MCF 10A (cell line): ENCODE measurements at regions of chr10 and their contacts with region 1.

Region 1: GRCh38 chr10:113087165-113088029 is 137.3 kb downstream of the TCF7L2 start:
- DNase-seq: peak; percentile 98
- H3K4me3 Mint-ChIP-seq: peak overlapping the region; percentile 35
- H3K27ac Mint-ChIP-seq: peak overlapping the region; percentile 91
- H3K4me1 Mint-ChIP-seq: peaks cover 29% of the 10 kb centered on the region
- H3K27me3 Mint-ChIP-seq: no peaks in the 10 kb centered on the region
- CTCF ChIP-seq: no peak

Region 2: DNA sequence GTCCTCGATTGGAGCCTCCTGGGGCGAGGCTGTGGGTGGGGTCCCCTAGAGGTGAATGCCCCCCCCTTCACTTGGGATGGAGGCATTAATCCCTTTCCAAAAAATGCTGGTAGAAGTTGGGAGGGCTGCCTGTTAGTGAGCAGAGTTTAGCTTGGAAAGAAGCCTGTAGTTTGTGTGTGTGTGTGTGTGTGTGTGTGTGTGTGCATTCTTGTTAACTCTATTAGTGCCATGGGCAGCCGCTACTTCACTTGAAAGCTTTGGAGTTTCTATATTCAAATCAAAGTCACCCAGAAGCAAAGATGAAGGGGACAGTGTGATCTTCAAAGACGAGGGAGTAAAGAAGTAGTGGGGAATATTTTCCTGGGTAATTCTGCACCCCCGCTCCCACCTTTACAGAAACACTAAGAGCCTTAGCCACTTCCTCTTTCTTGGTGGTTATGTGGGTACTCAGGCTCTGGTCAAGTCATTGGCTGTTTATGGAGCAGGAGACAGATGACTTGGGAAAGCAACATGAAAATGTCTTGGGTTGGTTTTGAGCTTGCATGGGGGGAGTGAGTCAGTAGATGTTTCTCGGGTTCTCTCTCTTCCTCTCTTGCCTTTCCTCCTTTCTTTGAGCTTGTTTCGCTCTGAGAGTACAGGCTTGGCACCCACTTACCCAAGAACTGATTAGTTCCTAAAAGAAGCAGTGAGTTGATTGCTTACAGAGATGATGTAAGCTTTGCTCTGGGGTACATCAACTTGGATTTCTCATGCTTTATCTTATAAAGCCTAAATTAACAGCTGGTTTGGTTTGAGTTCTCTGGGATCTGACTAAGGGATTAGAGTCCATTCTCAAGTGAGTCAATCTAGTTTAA is 101.5 kb before region 1 on chr10:
- CTCF ChIA-PET with region 1: no interaction called
- POLR2A ChIA-PET with region 1: no interaction called
- intact Hi-C with region 1: no loop called
- DNase-seq: no peak
- H3K4me3 Mint-ChIP-seq: no peak overlapping the region
- H3K27ac Mint-ChIP-seq: no peak overlapping the region
- H3K4me1 Mint-ChIP-seq: peaks cover 26% of the 10 kb centered on the region
- H3K27me3 Mint-ChIP-seq: no peaks in the 10 kb centered on the region
- CTCF ChIP-seq: no peak

Region 3: DNA sequence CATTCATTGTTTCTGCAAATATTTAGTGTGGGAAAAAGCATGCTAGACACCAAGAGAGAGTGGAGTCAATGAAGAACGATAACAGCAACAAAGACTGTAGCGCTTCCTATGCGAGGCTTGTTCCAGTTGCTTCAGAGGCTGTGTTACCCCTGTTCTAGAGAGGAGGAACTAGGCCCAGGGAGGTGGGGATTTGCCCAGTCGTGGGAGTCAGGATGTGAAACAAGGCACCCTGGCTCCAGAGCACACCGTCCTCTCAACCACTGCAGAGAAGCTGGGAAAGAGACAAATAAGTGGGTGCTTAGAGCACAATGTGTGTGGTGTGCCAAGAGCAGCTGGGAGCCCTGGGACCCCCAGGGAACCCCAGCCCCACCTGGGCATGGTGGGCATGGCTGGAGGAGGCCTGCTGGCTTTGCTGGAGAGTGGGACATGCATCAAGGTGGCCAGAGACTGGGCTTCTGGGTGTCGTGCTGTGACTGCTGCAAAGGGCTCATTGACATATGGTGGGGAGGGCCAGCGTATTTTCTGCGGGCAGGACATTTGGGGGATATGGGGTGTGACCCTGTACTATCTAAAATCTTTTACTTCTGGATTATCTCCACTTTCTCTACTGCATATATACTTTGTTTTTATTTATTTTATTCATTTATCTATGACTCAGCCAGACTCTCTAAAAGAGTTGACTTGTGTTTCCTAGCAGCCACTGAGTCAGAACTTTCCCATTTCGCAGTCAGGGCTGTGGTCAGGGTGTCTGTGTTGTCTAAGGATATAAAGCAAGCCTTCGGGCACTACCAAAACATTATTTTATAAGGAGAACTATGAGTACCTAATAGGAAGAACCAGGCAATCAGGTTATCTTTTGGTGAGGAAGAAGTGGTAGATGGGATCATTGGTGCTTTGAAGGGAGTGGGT is 42.0 kb before region 1 on chr10:
- CTCF ChIA-PET with region 1: interaction called, 3 read pairs
- POLR2A ChIA-PET with region 1: interaction called, 3 read pairs
- intact Hi-C with region 1: loop called (anchors 2 kb)
- DNase-seq: peak; percentile 89
- H3K4me3 Mint-ChIP-seq: peak overlapping the region; percentile 32
- H3K27ac Mint-ChIP-seq: peak overlapping the region; percentile 71
- H3K4me1 Mint-ChIP-seq: peaks cover 69% of the 10 kb centered on the region
- H3K27me3 Mint-ChIP-seq: no peaks in the 10 kb centered on the region
- CTCF ChIP-seq: no peak

Region 4: DNA sequence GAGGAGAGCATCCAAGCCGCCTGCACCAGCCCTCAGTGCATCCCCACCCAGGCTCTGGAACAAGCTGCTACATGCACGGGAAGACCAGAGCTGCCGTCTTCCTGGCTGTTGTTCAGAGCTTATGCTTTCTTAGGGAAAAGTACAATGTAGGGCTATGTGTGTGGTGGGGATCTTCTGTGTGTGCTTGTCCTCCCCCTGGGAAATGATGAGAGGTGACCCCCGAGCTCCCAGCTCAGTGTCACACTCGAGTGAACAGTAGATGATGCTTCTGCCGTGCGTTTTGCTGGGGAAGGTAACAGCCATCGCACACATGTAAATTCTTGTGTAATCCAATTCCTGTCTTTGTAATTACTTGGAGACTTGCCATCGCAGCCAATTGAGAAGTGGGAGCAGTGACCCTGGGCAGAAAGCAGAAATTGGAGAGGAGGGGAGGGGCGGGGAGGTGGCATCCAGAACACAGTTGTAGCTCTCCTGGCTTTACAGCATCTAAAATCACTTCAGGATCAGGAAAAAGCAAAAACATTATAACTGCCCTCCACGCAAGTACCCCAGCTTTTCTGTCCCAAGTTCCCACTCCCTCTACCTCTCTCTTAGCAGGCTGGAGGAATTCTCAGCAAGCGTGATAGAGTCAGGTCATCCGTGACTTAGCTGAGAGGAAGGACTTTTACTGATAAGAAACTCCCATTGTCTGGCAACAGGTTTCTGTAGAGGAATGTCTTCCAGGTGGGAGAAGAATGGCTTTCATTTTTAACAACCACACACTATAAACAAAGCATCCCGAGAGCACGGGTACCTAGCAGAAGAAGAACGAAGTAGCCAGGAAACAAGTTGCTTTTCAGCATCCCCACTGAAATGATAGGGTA is 12.3 kb after region 1 on chr10:
- CTCF ChIA-PET with region 1: interaction called, 3 read pairs
- POLR2A ChIA-PET with region 1: interaction called, 11 read pairs
- intact Hi-C with region 1: no loop called
- DNase-seq: peak; percentile 86
- H3K4me3 Mint-ChIP-seq: peak overlapping the region; percentile 32
- H3K27ac Mint-ChIP-seq: peak overlapping the region; percentile 53
- H3K4me1 Mint-ChIP-seq: peaks cover 15% of the 10 kb centered on the region
- H3K27me3 Mint-ChIP-seq: no peaks in the 10 kb centered on the region
- CTCF ChIP-seq: no peak

Region 5: GRCh38 chr10:113213035-113213434 is 125.6 kb after region 1 on chr10:
- CTCF ChIA-PET with region 1: no interaction called
- POLR2A ChIA-PET with region 1: no interaction called
- intact Hi-C with region 1: no loop called
- DNase-seq: no peak
- H3K4me3 Mint-ChIP-seq: no peak overlapping the region
- H3K27ac Mint-ChIP-seq: no peak overlapping the region
- H3K4me1 Mint-ChIP-seq: no peaks in the 10 kb centered on the region
- H3K27me3 Mint-ChIP-seq: peaks cover 39% of the 10 kb centered on the region
- CTCF ChIP-seq: no peak